CD4-positive, alpha-beta memory T cell (primary cell): ENCODE measurements at regions of chr12 and their contacts with region 1.

Region 1: GRCh38 chr12:21501379-21501956 is at the starts of genes GOLT1B and RECQL:
- DNase-seq: peak; percentile 93 to 96 (median 95)
- H3K4me3 ChIP-seq: peak within 1 kb of the TSS; percentile 77 to 93
- H3K4me3 Mint-ChIP-seq: no peak within 1 kb of the TSS
- H3K27ac ChIP-seq: peak within 1 kb of the TSS; percentile 78
- H3K27ac Mint-ChIP-seq: peak within 1 kb of the TSS in 1 of 7 donors; percentile 71
- H3K4me1 ChIP-seq: peaks cover 64% of the 10 kb centered on the region
- H3K4me1 Mint-ChIP-seq: peaks cover 28 to 61% (median 46%) of the 10 kb centered on the region in 4 donors
- H3K27me3 ChIP-seq: no peaks in the 10 kb centered on the region
- H3K27me3 Mint-ChIP-seq: no peaks in the 10 kb centered on the region
- total RNA-seq, gene GOLT1B: 33.0 to 39.1 TPM
- total RNA-seq, gene RECQL: 64.0 to 67.8 TPM

Region 2: DNA sequence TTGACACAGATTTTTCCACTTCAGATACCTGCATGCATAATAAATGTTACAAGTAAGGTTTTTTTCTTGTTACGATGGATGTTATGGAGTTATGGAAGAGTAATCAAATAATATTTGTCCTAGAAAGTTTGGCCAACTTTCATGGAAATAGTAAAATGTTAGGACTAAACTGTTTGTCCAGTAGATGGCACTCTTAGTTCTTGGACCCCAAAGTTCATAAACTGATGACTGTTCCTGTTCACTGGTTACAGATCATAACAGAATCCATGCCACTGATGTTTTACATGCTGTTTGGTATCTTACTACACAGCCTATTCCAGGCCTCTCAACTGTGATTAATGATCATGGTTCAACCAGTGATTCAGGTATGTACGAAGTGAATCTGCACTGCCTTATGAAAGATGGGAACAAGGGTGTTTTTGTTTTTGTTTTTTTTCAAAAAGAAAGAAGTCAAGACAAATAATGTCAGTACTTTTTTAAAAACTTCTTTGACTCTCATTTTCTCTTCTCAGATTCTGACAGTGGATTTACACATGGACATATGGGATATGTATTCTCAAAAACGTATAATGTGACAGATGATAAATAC is 855.1 kb before region 1 on chr12:
- CTCF ChIA-PET with region 1: no interaction called
- POLR2A ChIA-PET with region 1: no interaction called
- intact Hi-C with region 1: loop called (anchors 5 kb)
- DNase-seq: no peak
- H3K4me3 ChIP-seq: no peak overlapping the region
- H3K4me3 Mint-ChIP-seq: no peak overlapping the region
- H3K27ac ChIP-seq: no peak overlapping the region
- H3K27ac Mint-ChIP-seq: no peak overlapping the region
- H3K4me1 ChIP-seq: no peaks in the 10 kb centered on the region
- H3K4me1 Mint-ChIP-seq: no peaks in the 10 kb centered on the region
- H3K27me3 ChIP-seq: no peaks in the 10 kb centered on the region
- H3K27me3 Mint-ChIP-seq: peaks cover 0 to 1% of the 10 kb centered on the region in 2 donors

Region 3: DNA sequence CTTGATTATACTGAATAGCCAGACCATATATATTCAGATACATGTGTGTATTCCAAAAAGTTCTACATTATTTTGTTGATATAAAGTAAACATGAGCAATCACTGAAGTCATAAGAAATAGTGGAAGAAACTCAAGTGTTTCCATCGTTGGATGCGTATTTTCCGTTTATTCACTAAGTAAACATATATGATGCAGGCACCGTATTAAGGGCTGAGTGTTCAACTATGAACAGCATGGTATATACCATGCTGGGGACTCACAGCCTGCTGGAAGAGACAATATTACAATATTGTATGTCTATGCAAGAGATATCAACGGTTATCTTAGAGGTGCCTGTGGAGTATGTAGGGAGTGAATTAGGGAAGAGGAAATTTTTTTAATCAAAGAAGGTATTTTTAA is 62.8 kb before region 1 on chr12:
- CTCF ChIA-PET with region 1: no interaction called
- POLR2A ChIA-PET with region 1: interaction called, 38 read pairs
- intact Hi-C with region 1: loop called (anchors 1 kb)
- DNase-seq: no peak
- H3K4me3 ChIP-seq: peak overlapping the region; percentile 92 to 94
- H3K4me3 Mint-ChIP-seq: peak overlapping the region; percentile 97 to 100 (median 98)
- H3K27ac ChIP-seq: peak overlapping the region; percentile 81
- H3K27ac Mint-ChIP-seq: peak overlapping the region; percentile 97 to 99 (median 98)
- H3K4me1 ChIP-seq: peaks cover 53% of the 10 kb centered on the region
- H3K4me1 Mint-ChIP-seq: peaks cover 27 to 66% (median 46%) of the 10 kb centered on the region in 4 donors
- H3K27me3 ChIP-seq: no peaks in the 10 kb centered on the region
- H3K27me3 Mint-ChIP-seq: no peaks in the 10 kb centered on the region

Region 4: GRCh38 chr12:21527451-21528180 is 26.1 kb after region 1 on chr12:
- CTCF ChIA-PET with region 1: interaction called, 3 read pairs
- POLR2A ChIA-PET with region 1: interaction called, 13 read pairs
- intact Hi-C with region 1: no loop called
- DNase-seq: peak; percentile 52 to 66 (median 58)
- H3K4me3 ChIP-seq: peak overlapping the region; percentile 27 to 61
- H3K4me3 Mint-ChIP-seq: peak overlapping the region; percentile 81 to 89 (median 84)
- H3K27ac ChIP-seq: no peak overlapping the region
- H3K27ac Mint-ChIP-seq: no peak overlapping the region
- H3K4me1 ChIP-seq: peaks cover 12% of the 10 kb centered on the region
- H3K4me1 Mint-ChIP-seq: peaks cover 4 to 9% (median 5%) of the 10 kb centered on the region in 4 donors
- H3K27me3 ChIP-seq: peaks cover 8% of the 10 kb centered on the region
- H3K27me3 Mint-ChIP-seq: peaks cover 17 to 21% of the 10 kb centered on the region in 2 donors

Region 5: DNA sequence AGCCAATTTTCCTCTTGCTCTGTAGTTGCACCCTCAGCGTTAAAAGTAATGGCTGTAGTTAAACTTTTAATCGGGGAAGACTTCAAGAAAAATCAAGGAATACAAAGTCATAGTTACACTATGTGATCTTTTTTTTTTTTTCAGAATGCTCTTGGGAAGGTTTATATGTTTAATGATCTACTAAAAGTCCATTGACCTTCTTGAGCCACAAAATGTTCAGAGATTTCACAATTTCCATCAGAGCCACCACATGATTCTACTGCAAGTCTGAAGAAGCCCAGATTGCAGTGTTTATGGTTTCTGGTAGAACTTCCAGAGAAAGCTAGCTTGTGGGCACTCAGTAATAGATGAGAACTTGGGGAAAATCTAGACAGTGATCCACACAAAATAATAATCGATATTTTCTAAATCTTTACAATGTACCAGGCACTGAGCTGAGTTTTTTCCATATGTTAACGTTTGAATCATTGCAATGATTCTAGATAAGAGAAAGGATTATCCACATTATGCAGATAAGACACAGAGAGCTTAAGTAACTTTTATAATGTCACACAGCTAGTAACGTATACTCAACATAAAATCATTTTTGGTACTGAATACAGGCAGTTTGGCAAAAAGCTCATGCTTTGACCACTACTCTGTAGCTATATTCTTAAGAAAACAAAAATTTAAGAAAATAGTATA is 64.9 kb after region 1 on chr12:
- CTCF ChIA-PET with region 1: no interaction called
- POLR2A ChIA-PET with region 1: no interaction called
- intact Hi-C with region 1: no loop called
- DNase-seq: no peak
- H3K4me3 ChIP-seq: no peak overlapping the region
- H3K4me3 Mint-ChIP-seq: no peak overlapping the region
- H3K27ac ChIP-seq: no peak overlapping the region
- H3K27ac Mint-ChIP-seq: no peak overlapping the region
- H3K4me1 ChIP-seq: no peaks in the 10 kb centered on the region
- H3K4me1 Mint-ChIP-seq: no peaks in the 10 kb centered on the region
- H3K27me3 ChIP-seq: no peaks in the 10 kb centered on the region
- H3K27me3 Mint-ChIP-seq: peaks cover 0 to 1% of the 10 kb centered on the region in 2 donors

Region 6: GRCh38 chr12:21657326-21658077 is 156.0 kb after region 1 on chr12 and contains the start of gene LDHB:
- CTCF ChIA-PET with region 1: no interaction called
- POLR2A ChIA-PET with region 1: interaction called, 19 read pairs
- intact Hi-C with region 1: loop called (anchors 1 kb)
- DNase-seq: peak; percentile 88 to 97 (median 90)
- H3K4me3 ChIP-seq: peak within 1 kb of the TSS; percentile 85 to 89
- H3K4me3 Mint-ChIP-seq: peak within 1 kb of the TSS; percentile 93 to 100 (median 100)
- H3K27ac ChIP-seq: peak within 1 kb of the TSS; percentile 71
- H3K27ac Mint-ChIP-seq: peak within 1 kb of the TSS; percentile 94 to 99 (median 98)
- H3K4me1 ChIP-seq: peaks cover 59% of the 10 kb centered on the region
- H3K4me1 Mint-ChIP-seq: peaks cover 33 to 84% (median 51%) of the 10 kb centered on the region in 4 donors
- H3K27me3 ChIP-seq: no peaks in the 10 kb centered on the region
- H3K27me3 Mint-ChIP-seq: no peaks in the 10 kb centered on the region
- total RNA-seq, gene LDHB: 1,100 to 1,180 TPM

Region 7: GRCh38 chr12:21710948-21711775 is 209.7 kb after region 1 on chr12:
- CTCF ChIA-PET with region 1: no interaction called
- POLR2A ChIA-PET with region 1: no interaction called
- intact Hi-C with region 1: no loop called
- DNase-seq: no peak
- H3K4me3 ChIP-seq: no peak overlapping the region
- H3K4me3 Mint-ChIP-seq: peak overlapping the region in 1 of 8 donors; percentile 31
- H3K27ac ChIP-seq: no peak overlapping the region
- H3K27ac Mint-ChIP-seq: no peak overlapping the region
- H3K4me1 ChIP-seq: no peaks in the 10 kb centered on the region
- H3K4me1 Mint-ChIP-seq: peaks cover 0 to 3% (median 0%) of the 10 kb centered on the region in 4 donors
- H3K27me3 ChIP-seq: no peaks in the 10 kb centered on the region
- H3K27me3 Mint-ChIP-seq: peaks cover 7 to 13% of the 10 kb centered on the region in 2 donors

Region 8: DNA sequence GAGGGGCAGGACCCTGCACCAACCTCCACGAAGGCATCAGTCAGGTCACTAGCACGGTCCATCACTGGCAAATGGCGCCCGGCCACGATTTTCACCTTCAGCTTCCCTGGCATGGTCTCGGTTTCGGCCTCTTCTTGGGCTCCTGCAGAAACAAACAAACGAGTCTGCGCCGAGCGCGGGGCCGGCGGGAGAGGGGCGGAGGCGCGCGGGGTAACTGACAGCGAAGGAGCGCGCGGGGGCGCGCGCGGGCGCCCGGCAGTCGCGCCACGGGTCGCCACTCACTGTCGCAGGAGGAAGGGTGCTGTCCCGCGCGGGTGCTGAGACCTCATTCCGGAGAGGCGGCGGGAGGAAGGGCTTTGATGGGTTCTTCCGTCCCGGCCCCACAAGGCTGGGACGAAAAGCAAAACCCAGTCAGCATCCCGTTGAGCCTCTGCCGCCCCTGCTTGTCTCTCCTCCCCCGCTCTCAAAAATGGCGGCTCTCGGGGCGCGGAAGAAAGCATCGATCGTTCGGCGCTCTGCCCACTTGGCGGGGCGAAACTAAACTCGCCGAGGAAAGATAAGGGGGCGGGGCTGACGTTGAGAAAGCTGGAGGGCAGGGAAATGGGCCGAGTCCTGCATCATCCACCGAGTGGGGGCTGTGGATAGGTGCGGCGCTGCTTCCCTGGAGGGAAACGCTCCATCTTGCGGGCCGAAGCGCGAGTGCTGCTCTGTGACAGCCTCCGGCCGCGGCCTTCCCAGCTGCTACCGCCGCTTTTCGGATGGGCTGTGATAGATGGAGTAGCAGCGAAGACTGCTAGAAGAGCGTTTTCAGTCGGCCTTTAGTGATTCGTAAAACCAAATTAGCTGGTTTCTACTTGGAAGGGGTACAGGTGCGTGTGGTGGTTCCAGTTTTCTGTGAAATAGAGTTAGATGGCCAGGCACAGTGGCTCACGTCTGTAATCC is 1042.8 kb after region 1 on chr12 and contains the start of gene C2CD5:
- CTCF ChIA-PET with region 1: no interaction called
- POLR2A ChIA-PET with region 1: interaction called, 3 read pairs
- intact Hi-C with region 1: loop called (anchors 5 kb)
- DNase-seq: peak; percentile 95 to 98 (median 96)
- H3K4me3 ChIP-seq: peak within 1 kb of the TSS; percentile 87 to 97
- H3K4me3 Mint-ChIP-seq: peak within 1 kb of the TSS; percentile 89 to 98 (median 94)
- H3K27ac ChIP-seq: peak within 1 kb of the TSS; percentile 78
- H3K27ac Mint-ChIP-seq: peak within 1 kb of the TSS; percentile 95 to 97 (median 96)
- H3K4me1 ChIP-seq: peaks cover 44% of the 10 kb centered on the region
- H3K4me1 Mint-ChIP-seq: peaks cover 29 to 45% (median 36%) of the 10 kb centered on the region in 4 donors
- H3K27me3 ChIP-seq: no peaks in the 10 kb centered on the region
- H3K27me3 Mint-ChIP-seq: peaks cover 0 to 4% of the 10 kb centered on the region in 2 donors
- total RNA-seq, gene C2CD5: 59.3 to 59.8 TPM